Posterior cingulate gyrus (tissue), 11 donors: ENCODE measurements at regions of chr18 and their contacts with region 1.

Region 1: GRCh38 chr18:63119647-63120046 is 199.9 kb downstream of the BCL2 start:
- DNase-seq: peak in 9 of 10 donors; percentile 21 to 94 (median 61)

Region 2: DNA sequence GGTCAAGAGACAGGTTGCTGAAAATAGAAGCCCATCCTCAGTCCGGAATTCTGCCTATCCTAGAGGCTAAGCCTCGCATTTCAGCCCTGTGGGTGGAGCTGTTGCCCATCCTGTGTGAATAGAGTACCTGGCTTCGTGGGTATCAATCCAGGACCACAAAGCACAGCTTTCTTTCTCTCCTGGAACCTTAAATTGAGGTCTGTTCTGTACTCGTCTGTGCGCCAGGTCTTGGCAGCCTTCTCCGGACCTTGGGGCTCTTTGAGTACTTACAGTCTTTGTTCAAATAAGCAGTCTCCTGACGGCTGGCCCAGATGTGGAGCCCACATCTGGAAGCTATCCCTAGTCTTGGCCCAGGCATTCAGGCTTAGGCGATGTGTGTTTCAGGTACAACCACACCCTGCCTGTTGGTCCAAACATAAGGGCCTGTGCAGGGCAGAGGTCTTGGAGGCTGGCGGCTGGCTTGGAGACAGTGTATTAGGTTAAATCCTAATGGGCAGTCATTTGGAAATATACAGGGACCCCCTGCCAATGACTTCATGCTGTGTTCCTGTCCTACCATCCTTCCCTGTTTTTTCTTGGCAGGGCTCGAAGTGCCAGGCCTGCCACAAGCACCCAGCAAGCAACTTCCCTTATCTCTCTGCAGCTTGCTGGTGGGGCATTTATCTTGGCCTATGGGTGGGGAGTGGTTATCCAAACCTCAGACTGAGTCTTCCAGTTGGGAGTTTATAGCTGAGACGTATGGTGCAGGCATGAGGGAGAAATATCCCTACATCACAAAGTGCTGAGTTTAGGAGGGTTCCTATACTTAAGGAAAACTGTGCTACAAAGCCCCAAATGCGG is 94.2 kb before region 1 on chr18:
- intact Hi-C with region 1: loop called (anchors 10 kb)
- DNase-seq: peak in 1 of 10 donors; percentile 11